ENCODE measurements at regions of chr6 and their contacts with region 1.

Region 1: DNA sequence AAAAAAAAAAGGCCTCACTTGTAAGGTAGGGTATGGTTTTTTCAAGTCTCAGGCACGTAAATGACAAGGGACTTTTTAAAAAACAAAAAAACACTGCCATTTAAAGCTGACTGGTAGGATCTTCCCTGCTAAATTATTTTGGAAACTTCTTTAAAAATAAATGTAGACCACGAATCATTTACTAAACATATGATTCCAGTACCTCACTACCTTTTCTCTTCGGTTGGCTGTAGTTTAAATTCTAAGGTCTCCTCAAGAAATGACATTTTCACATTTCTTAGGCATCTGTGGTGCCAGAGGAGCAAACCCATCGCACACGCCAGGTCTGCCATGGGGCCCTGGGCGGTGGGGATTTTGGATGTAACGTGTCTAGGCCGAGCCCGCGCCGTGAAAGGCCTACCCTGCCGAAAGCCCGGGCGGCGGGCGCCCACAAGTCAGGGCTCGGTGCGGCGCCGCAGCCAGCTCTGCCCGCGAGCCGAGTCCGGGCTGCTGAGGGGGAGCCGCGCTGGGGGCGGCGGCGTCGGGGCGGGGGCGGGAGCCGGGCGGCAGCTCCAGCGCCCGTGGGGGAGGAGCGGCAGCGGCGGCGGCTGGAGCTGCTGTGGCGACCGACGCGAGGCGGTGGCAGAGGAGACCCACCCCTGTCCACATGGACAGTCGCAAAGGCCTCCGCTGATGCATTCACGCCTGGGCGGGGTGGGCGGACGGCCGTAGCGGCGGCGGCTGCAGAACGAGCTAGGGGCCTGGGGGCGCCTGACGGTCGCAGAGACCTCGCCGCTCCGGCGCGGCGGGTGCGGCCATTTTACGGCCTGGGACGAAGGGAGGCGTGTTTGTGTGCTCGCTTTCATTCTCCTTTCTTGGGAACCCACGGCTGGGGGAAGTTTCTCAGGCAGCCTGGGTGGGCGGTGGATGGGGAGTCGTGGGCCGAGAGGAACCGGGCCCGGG is at the start of gene SENP6:
- H3K4me3 ChIP-seq: peak within 1 kb of the TSS; percentile 91
- H3K27ac ChIP-seq: peak within 1 kb of the TSS; percentile 99
- H3K4me1 ChIP-seq: peaks cover 19% of the 10 kb centered on the region; the same call in 1 of the 2 replicates
- CTCF ChIP-seq: no peak; the same call in 1 of the 2 replicates

Region 2: GRCh38 chr6:75143191-75143590 is 458.4 kb before region 1 on chr6:
- CTCF ChIA-PET with region 1: no interaction called
- POLR2A ChIA-PET with region 1: no interaction called
- H3K4me3 ChIP-seq: no peak overlapping the region
- H3K27ac ChIP-seq: no peak overlapping the region
- H3K4me1 ChIP-seq: no peaks in the 10 kb centered on the region
- CTCF ChIP-seq: no peak

Region 3: GRCh38 chr6:75611702-75612375 is 10.3 kb after region 1 on chr6:
- CTCF ChIA-PET with region 1: no interaction called
- POLR2A ChIA-PET with region 1: interaction called, 13 read pairs
- H3K4me3 ChIP-seq: no peak overlapping the region
- H3K27ac ChIP-seq: no peak overlapping the region
- H3K4me1 ChIP-seq: peaks cover 21% of the 10 kb centered on the region
- CTCF ChIP-seq: no peak

Region 4: GRCh38 chr6:75620381-75621304 is 19.1 kb after region 1 on chr6:
- CTCF ChIA-PET with region 1: no interaction called
- POLR2A ChIA-PET with region 1: interaction called, 13 read pairs
- H3K4me3 ChIP-seq: no peak overlapping the region
- H3K27ac ChIP-seq: no peak overlapping the region
- H3K4me1 ChIP-seq: peaks cover 15% of the 10 kb centered on the region
- CTCF ChIP-seq: no peak